ENCODE measurements at regions of chr9 and their contacts with region 1.

Region 1: GRCh38 chr9:81549500-81550206 is 139.7 kb downstream of the TLE1 start:
- DNase-seq: no peak
- ATAC-seq: no peak
- H3K4me3 ChIP-seq: no peak overlapping the region
- H3K27ac ChIP-seq: no peak overlapping the region
- H3K4me1 ChIP-seq: no peaks in the 10 kb centered on the region
- H3K27me3 ChIP-seq: no peaks in the 10 kb centered on the region
- CTCF ChIP-seq: no peak

Region 2: DNA sequence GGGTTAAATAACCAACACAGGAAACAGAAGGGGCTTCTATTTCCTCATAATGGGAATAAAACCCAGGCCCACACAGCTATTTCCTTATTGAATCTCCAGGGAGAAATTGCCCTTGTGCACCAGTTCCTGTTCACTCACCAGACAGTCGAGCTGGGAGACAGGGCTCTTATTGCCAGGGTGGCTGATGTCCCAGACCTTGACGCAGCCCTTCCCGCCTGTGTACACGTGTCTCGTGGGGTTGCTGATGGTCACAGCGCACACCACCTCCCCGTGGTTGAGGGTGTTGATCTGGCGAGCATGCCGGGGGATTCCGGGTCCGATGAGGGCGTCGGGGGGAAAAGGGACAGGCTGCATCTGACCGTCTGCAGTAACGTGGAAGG is 43.2 kb after region 1 on chr9:
- intact Hi-C with region 1: loop called in 1 of 2 experiments (anchors 10 kb)
- DNase-seq: peak; percentile 43 to 73
- ATAC-seq: peak in 3 of 4 donors; percentile 60 to 72 (median 71)
- H3K4me3 ChIP-seq: no peak overlapping the region
- H3K27ac ChIP-seq: no peak overlapping the region
- H3K4me1 ChIP-seq: peaks cover 13% of the 10 kb centered on the region
- H3K27me3 ChIP-seq: no peaks in the 10 kb centered on the region
- CTCF ChIP-seq: no peak